ENCODE measurements at regions of chr17 and their contacts with region 1.

Region 1: DNA sequence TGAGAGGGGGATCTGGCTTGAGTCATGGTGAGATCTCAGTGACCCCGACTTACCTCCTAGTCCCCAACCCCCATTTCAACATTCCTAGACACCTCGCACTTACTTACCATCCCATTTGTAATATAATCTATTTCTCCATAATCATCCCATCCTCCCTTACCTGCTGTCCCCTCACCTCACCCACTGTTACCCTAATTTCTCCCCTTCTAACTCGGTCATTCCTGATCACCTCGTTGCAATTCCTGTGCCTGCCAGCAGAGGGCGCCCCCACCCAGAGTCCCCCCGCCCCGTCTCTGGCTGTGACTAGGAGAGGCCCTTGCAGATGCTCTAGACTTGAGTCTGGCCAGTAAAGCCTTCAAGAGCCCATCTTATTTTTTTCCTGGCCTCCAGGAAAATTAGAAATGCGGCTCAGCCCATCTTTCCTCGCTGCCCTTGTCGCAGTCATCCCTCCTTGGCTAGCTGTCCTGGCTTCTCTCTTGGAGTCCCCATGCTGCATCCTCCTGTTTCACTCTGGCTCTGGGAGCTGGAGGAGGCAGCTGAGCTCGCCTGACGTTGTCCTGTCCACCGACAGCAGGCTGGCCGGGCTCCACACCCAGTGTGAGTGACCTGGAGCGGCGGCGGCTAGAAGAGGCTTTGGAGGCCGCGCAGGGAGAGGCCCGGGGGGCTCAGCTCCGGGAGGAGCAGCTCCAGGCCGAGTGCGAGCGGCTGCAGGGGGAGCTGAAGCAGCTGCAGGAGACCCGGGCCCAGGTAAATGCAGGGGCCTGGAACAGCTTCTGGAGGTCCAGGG is 5.0 kb downstream of the TBKBP1 start:
- DNase-seq: peak; percentile 67
- H3K4me3 ChIP-seq: no peak overlapping the region
- H3K27ac ChIP-seq: no peak overlapping the region
- H3K4me1 ChIP-seq: peaks cover 0 to 29% (median 8%) of the 10 kb centered on the region in 4 donors
- H3K27me3 ChIP-seq: peaks cover 16% of the 10 kb centered on the region
- CTCF ChIP-seq: peak; percentile 83 to 99 (median 98)
- EP300 ChIP-seq: no peak
- POLR2A ChIP-seq: no peak

Region 2: GRCh38 chr17:47789611-47790561 is 90.9 kb after region 1 on chr17:
- in situ Hi-C with region 1: loop called in 1 of 4 experiments (anchors 10 kb)
- intact Hi-C with region 1: no loop called
- DNase-seq: peak; percentile 49
- H3K4me3 ChIP-seq: peak overlapping the region in 3 of 4 donors; percentile 25 to 53 (median 26)
- H3K27ac ChIP-seq: no peak overlapping the region
- H3K4me1 ChIP-seq: peaks cover 5 to 11% (median 8%) of the 10 kb centered on the region in 4 donors
- H3K27me3 ChIP-seq: peaks cover 94% of the 10 kb centered on the region
- CTCF ChIP-seq: peak in 4 of 5 experiments; percentile 36 to 45 (median 38)
- EP300 ChIP-seq: no peak
- POLR2A ChIP-seq: no peak

Measured in transverse colon (tissue), 4 donors.